Vagina (tissue), 2 donors: ENCODE measurements at regions of chr11 and their contacts with region 1.

Region 1: DNA sequence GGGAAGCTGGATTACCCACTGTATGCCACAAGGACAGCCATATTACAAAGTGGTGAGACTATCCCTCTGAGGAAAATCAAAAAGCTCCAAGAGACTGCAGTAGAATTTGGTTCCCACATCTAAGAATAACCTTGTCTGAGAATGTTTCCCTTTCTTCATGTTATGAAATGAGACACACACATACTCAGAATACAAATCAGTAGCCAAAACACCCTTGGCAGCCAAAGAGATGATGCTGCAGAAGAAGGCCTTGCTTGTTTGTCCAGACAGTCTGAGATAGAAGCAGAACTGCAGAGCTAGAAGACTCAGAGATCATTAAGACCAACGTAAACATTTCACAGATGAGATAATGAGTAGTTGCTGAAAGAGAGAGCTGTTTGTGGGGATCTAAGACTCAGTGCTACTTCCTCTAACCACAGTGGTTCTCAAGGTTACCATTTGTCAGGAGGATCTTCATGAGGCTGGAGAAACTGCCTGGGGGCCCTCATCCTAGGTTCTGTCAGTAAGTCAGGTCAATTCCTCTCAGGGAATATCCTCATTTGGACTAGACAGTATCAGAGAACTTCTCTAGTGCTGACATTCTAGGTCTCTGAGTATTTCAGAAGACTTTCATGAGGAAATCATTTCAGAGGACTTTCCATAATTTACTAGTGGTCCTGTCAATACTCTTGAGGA is 38.9 kb downstream of the RELT start:
- DNase-seq: no peak
- H3K4me3 ChIP-seq: no peak overlapping the region
- H3K27ac ChIP-seq: peak overlapping the region; percentile 24
- H3K4me1 ChIP-seq: peaks cover 16% of the 10 kb centered on the region
- H3K27me3 ChIP-seq: no peaks in the 10 kb centered on the region
- CTCF ChIP-seq: no peak
- POLR2A ChIP-seq: no peak

Region 2: DNA sequence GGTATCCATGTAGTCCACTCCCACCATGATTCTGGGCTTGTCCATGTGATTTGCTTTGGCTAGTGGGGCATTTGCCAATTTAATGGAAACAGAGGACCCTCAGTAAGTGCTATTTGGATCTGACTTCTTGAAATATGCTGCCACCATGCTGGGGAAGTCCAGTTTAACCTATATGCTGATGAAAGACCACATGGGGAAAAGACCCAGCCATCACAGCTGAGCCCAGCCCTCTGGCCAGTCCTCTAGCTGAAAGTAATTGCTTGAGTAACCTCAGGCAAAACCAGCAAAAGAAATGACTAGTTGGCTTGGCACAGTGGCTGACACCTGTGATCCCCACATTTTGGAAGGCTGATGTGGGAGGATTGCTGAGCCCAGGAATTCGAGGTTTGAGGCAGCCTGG is 539.4 kb before region 1 on chr11:
- intact Hi-C with region 1: loop called (anchors 5 kb)
- DNase-seq: no peak
- H3K4me3 ChIP-seq: no peak overlapping the region
- H3K27ac ChIP-seq: no peak overlapping the region
- H3K4me1 ChIP-seq: no peaks in the 10 kb centered on the region
- H3K27me3 ChIP-seq: no peaks in the 10 kb centered on the region
- CTCF ChIP-seq: no peak
- POLR2A ChIP-seq: no peak

Region 3: DNA sequence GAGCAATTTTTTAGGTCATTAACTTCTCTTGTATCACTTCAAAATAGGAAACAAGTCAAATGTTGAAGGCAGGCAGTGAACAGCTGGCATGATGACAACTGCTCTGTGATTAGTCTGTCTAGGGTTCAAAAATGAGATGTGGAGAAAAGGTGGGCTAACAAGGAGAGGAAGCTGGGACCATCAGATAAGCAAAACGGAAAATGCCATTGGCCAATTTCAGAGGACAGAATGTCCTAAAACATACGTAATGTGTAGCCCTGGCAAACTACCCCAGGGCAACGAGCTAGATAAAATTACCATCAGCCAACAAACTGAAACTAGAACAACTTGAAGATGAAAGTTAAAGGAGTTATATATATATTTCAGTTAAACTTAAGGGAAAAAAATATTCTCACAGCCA is 54.3 kb after region 1 on chr11:
- intact Hi-C with region 1: no loop called
- DNase-seq: no peak
- H3K4me3 ChIP-seq: no peak overlapping the region
- H3K27ac ChIP-seq: peak overlapping the region; percentile 10
- H3K4me1 ChIP-seq: no peaks in the 10 kb centered on the region
- H3K27me3 ChIP-seq: no peaks in the 10 kb centered on the region
- CTCF ChIP-seq: no peak
- POLR2A ChIP-seq: no peak

Region 4: DNA sequence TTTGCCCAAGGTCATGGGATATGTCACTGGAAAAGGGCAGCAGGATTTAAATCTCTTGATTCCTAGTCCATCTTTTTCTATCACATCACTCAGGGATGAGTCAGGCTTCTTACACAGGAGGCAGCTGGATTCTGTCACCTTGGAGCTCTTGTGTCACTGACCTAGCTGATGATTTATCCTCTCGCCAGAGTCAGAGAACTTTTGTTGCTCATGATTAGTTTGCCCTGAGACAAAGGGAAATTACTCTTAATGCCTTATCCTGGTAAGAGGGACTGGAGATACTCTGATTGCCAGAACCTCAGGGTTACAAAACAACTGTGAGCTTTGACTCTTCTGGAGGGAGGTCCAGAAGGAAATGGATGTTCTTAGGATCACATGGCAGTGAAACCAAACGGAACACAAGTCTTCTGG is 451.5 kb after region 1 on chr11:
- intact Hi-C with region 1: no loop called
- DNase-seq: no peak
- H3K4me3 ChIP-seq: no peak overlapping the region
- H3K27ac ChIP-seq: peak overlapping the region; percentile 38
- H3K4me1 ChIP-seq: peaks cover 8% of the 10 kb centered on the region
- H3K27me3 ChIP-seq: no peaks in the 10 kb centered on the region
- CTCF ChIP-seq: no peak
- POLR2A ChIP-seq: no peak